ENCODE measurements at regions of chr6 and their contacts with region 1.

Region 1: DNA sequence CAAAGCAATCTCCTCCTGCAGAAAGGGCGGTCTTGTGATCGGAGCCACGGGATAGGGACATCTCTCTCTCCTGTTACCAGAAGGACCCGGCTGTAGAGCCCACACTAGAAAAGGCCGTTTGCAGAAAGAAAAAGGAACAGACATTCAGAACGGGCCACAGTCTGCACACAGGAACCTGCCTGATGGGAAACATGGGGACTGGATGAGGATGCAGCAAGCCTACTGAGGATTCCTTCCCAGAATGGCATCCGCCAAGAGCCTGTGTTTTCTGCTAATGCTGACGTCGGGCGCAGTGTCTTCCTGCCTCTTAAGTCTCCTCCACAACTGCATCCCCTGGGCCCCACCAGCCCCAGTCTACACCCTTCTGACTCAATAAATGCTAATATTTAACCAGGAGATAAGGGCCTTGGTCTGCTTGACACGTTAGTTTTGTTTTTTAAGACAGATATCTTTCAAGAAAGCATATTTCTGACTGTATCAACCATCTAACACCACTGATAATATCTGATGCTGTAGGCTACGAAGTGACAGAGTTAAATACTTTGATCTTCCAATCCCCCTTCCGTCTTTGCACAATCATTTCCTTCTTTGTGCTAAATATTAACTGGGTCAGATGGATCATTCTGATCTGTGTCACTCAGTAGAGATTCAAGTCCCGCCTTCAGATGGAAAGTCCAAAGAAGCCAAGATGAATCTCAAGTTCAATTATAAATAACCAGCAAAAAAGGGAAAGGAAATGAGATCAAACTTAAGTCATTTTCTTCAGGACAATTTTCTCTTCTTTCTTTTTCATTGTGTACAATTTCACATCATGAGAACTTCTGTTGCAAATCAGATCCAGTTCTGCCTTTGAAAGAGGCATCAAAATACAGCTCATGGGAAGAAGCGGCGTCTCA is 20.7 kb downstream of the FAM50B start:
- DNase-seq: peak; percentile 84 to 90
- H3K4me3 ChIP-seq: no peak overlapping the region
- H3K4me3 Mint-ChIP-seq: peak overlapping the region; percentile 20
- H3K27ac Mint-ChIP-seq: peak overlapping the region; percentile 63
- H3K4me1 ChIP-seq: peaks cover 34% of the 10 kb centered on the region
- H3K4me1 Mint-ChIP-seq: peaks cover 20% of the 10 kb centered on the region
- H3K27me3 ChIP-seq: no peaks in the 10 kb centered on the region
- H3K27me3 Mint-ChIP-seq: no peaks in the 10 kb centered on the region
- CTCF ChIP-seq: no peak

Region 2: GRCh38 chr6:3337521-3338350 is 532.1 kb before region 1 on chr6:
- CTCF ChIA-PET with region 1: no interaction called
- POLR2A ChIA-PET with region 1: no interaction called
- intact Hi-C with region 1: no loop called
- DNase-seq: no peak
- H3K4me3 ChIP-seq: no peak overlapping the region
- H3K4me3 Mint-ChIP-seq: no peak overlapping the region
- H3K27ac Mint-ChIP-seq: peak overlapping the region; percentile 37
- H3K4me1 ChIP-seq: peaks cover 19% of the 10 kb centered on the region
- H3K4me1 Mint-ChIP-seq: peaks cover 21% of the 10 kb centered on the region
- H3K27me3 ChIP-seq: no peaks in the 10 kb centered on the region
- H3K27me3 Mint-ChIP-seq: no peaks in the 10 kb centered on the region
- CTCF ChIP-seq: no peak

Region 3: DNA sequence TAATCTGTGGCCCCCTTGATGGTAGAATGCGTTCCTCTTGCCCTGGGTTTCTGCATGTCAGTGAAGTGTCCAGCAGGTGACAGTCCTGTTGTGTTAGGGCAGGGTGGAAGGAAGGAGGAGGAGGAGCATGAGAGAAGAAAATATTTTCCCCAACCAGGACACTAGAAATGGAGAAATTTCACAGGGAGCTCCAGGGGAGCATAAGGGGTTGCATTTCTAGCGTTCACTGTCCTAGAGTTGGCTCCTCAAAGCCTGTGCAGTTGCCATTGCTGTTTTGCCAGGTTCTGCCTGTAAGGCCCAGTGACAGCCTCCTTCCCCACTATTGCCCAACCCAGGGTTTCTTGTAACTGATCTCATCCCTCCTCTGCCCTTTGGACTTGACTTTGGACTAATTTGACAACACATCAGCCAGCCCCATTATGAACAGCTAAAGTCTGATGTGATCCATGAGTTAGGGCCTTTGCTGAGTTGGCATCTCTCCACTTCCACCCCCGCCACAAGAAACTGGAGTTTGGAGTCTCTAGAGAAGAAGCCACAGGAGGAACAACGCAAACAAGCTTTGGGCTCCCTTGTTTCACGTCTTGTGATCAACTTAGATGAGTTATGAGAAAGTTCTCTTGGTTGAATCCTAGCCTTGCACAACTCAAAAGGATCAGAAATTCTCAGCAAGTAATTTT is 34.7 kb before region 1 on chr6:
- CTCF ChIA-PET with region 1: no interaction called
- POLR2A ChIA-PET with region 1: no interaction called
- intact Hi-C with region 1: loop called (anchors 5 kb)
- DNase-seq: peak; percentile 62
- H3K4me3 ChIP-seq: no peak overlapping the region
- H3K4me3 Mint-ChIP-seq: no peak overlapping the region
- H3K27ac Mint-ChIP-seq: no peak overlapping the region
- H3K4me1 ChIP-seq: peaks cover 11% of the 10 kb centered on the region
- H3K4me1 Mint-ChIP-seq: peaks cover 7% of the 10 kb centered on the region
- H3K27me3 ChIP-seq: no peaks in the 10 kb centered on the region
- H3K27me3 Mint-ChIP-seq: no peaks in the 10 kb centered on the region
- CTCF ChIP-seq: peak; percentile 65 to 73

Region 4: GRCh38 chr6:3905945-3906845 is 36.3 kb after region 1 on chr6:
- CTCF ChIA-PET with region 1: no interaction called
- POLR2A ChIA-PET with region 1: no interaction called
- intact Hi-C with region 1: loop called (anchors 2 kb)
- DNase-seq: peak; percentile 42 to 65
- H3K4me3 ChIP-seq: no peak overlapping the region
- H3K4me3 Mint-ChIP-seq: no peak overlapping the region
- H3K27ac Mint-ChIP-seq: peak overlapping the region; percentile 82
- H3K4me1 ChIP-seq: peaks cover 41% of the 10 kb centered on the region
- H3K4me1 Mint-ChIP-seq: peaks cover 17% of the 10 kb centered on the region
- H3K27me3 ChIP-seq: no peaks in the 10 kb centered on the region
- H3K27me3 Mint-ChIP-seq: no peaks in the 10 kb centered on the region
- CTCF ChIP-seq: no peak

Region 5: GRCh38 chr6:3913077-3913957 is 43.4 kb after region 1 on chr6:
- CTCF ChIA-PET with region 1: no interaction called
- POLR2A ChIA-PET with region 1: no interaction called
- intact Hi-C with region 1: loop called (anchors 1 kb)
- DNase-seq: peak; percentile 65 to 73
- H3K4me3 ChIP-seq: no peak overlapping the region
- H3K4me3 Mint-ChIP-seq: peak overlapping the region; percentile 35
- H3K27ac Mint-ChIP-seq: peak overlapping the region; percentile 90
- H3K4me1 ChIP-seq: peaks cover 44% of the 10 kb centered on the region
- H3K4me1 Mint-ChIP-seq: peaks cover 23% of the 10 kb centered on the region
- H3K27me3 ChIP-seq: no peaks in the 10 kb centered on the region
- H3K27me3 Mint-ChIP-seq: no peaks in the 10 kb centered on the region
- CTCF ChIP-seq: no peak

Region 6: DNA sequence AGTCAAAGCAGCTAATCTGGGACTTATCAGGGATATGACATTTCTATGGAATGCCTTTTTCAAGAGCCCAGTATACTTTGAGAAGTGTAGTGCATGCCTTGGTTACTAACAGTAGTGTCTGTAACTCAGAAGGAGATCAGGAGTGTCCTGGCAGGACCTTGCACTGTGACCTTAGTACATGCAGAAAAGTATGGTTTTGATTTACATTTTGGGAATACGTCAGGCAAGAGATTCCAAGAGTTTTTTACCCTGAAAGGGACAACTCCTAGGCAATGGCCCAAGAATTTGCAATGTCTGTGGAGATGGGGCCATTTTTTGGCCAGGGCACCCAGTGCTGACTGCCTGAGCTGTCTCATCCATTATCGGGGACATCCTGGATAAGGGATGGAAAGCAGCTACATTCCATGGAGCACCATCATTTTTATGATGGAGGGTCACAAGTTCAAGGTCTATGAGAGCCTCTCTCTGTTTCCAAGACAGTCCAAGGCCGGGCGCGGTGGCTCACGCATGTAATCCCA is 59.5 kb after region 1 on chr6:
- CTCF ChIA-PET with region 1: no interaction called
- POLR2A ChIA-PET with region 1: no interaction called
- intact Hi-C with region 1: no loop called
- DNase-seq: no peak
- H3K4me3 ChIP-seq: no peak overlapping the region
- H3K4me3 Mint-ChIP-seq: no peak overlapping the region
- H3K27ac Mint-ChIP-seq: no peak overlapping the region
- H3K4me1 ChIP-seq: no peaks in the 10 kb centered on the region
- H3K4me1 Mint-ChIP-seq: no peaks in the 10 kb centered on the region
- H3K27me3 ChIP-seq: no peaks in the 10 kb centered on the region
- H3K27me3 Mint-ChIP-seq: no peaks in the 10 kb centered on the region
- CTCF ChIP-seq: no peak